ENCODE measurements at regions of chr16 and their contacts with region 1.

Region 1: GRCh38 chr16:27313422-27314160 is at the start of gene IL4R:
- DNase-seq: peak in 1 of 2 donors; percentile 32
- ATAC-seq: peak; percentile 14 to 47
- H3K4me3 ChIP-seq: peak within 1 kb of the TSS; percentile 59 to 73 (median 66)
- H3K27ac ChIP-seq: peak within 1 kb of the TSS; percentile 78 to 88 (median 82)
- H3K4me1 ChIP-seq: peaks cover 8% of the 10 kb centered on the region in 2 donors
- H3K27me3 ChIP-seq: peaks cover 7 to 15% (median 13%) of the 10 kb centered on the region in 3 donors
- CTCF ChIP-seq: no peak
- POLR2A ChIP-seq: peak; percentile 44 to 53
- total RNA-seq, gene IL4R: 4.5 to 7.4 (median 6.5) TPM

Region 2: DNA sequence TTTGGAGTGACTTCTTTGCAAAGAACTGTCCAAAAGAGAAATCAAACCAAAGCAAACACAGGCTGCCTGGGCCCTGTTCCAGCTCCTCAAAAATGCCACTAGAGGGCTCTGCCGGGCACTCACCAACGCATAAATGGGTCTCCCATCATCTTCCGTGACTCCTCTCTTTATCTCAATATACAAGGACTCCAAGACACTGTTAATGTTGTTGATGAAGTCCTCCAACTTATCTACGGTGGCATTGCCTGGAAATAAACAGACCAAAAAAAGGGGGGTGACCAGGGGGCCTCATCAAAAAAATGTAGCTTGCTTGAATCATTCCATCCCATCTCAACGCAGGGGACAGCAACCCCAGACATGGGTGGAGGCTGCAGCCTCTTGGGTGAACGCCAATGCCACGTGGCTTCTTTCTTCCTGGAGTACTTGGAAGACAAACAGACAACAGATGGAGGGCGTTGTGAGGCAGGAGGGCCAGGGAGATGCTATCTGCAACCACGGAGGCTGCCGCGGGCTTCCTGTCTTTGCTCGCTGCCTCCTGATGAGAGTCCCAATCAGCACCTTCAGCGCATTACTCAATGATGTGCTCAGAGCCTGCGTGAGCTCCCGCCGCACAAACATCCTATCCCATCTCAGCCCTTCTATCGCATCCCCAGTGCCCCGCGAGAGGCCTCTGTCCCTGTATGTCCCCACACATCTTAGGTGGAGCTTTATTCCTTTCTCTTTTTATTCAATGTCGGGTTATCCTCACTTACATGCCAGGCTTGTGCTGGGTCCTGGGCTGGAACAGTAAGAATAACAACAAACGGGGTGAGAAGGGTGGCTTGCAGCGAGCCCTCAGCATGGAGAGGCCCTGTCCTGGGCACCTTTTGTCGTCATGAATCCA is 78.3 kb before region 1 on chr16:
- in situ Hi-C with region 1: no loop called
- intact Hi-C with region 1: loop called (anchors 5 kb)
- DNase-seq: peak; percentile 73 to 75
- ATAC-seq: peak; percentile 72 to 81
- H3K4me3 ChIP-seq: no peak overlapping the region
- H3K27ac ChIP-seq: peak overlapping the region; percentile 52 to 64 (median 61)
- H3K4me1 ChIP-seq: peaks cover 5 to 16% of the 10 kb centered on the region in 2 donors
- H3K27me3 ChIP-seq: no peaks in the 10 kb centered on the region
- CTCF ChIP-seq: peak; percentile 37 to 77 (median 58)
- POLR2A ChIP-seq: peak in 1 of 2 donors; percentile 21

Region 3: GRCh38 chr16:27401768-27402568 is 88.4 kb after region 1 on chr16 and contains the start of gene IL21R:
- in situ Hi-C with region 1: loop called in 1 of 4 experiments (anchors 25 kb)
- intact Hi-C with region 1: no loop called
- DNase-seq: peak in 1 of 2 donors; percentile 50
- ATAC-seq: peak in 1 of 2 donors; percentile 23
- H3K4me3 ChIP-seq: no peak within 1 kb of the TSS
- H3K27ac ChIP-seq: no peak within 1 kb of the TSS
- H3K4me1 ChIP-seq: no peaks in the 10 kb centered on the region
- H3K27me3 ChIP-seq: peaks cover 7% of the 10 kb centered on the region in 3 donors
- CTCF ChIP-seq: no peak
- POLR2A ChIP-seq: no peak
- total RNA-seq, gene IL21R: 0.15 TPM in 1 of 4 donors, not detected in the others

Measured in gastrocnemius medialis (tissue), 4 donors.